ENCODE measurements at regions of chrX and their contacts with region 1.

Region 1: DNA sequence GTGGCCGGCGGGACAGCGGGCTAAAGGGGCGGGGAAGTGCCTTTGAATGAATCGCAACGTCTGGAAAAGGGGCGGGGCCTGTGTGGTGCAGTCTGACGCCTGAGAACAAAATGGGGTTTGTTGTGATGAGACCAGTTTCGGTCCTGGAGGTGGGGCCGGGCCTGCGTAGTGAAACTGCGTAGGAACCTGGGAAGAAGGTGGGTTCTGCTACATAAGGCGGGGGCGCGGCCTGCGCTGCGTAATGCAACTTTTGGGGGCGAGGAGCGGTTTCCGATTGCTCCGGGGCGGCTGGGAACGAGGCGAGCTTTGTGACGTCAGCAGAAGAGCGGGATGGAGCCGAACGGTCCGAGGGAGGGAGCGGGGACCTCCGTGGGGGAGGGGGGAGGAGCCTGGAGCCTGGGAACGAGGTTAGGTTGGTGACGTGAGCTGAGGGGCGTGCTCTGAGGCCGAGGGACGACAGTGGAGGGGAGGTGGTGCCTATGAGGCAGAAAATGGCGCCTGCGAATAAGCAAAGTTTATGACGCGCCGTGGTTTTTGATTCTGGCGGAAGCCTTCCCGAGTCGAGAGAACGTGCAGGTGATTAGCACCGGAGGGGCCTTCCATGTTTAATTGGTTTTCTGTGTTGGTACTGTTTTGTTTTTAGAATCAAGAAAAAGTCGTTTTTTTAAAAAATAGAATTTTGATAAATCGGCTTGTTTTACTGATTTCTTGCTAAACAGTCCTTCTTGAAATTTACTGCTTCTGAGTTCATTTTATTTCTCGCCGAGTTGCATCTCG is 716 bp downstream of the USP11 start:
- DNase-seq: peak; percentile 87
- ATAC-seq: peak; percentile 89
- H3K4me3 Mint-ChIP-seq: peak overlapping the region; percentile 93
- H3K27ac Mint-ChIP-seq: peak overlapping the region; percentile 100
- H3K4me1 Mint-ChIP-seq: peaks cover 10% of the 10 kb centered on the region
- H3K27me3 Mint-ChIP-seq: no peaks in the 10 kb centered on the region
- CTCF ChIP-seq: no peak

Region 2: GRCh38 chrX:46978341-46979291 is 254.9 kb before region 1 on chrX:
- CTCF ChIA-PET with region 1: no interaction called
- POLR2A ChIA-PET with region 1: no interaction called
- DNase-seq: peak; percentile 80
- ATAC-seq: peak; percentile 80
- H3K4me3 Mint-ChIP-seq: no peak overlapping the region
- H3K27ac Mint-ChIP-seq: peak overlapping the region; percentile 28
- H3K4me1 Mint-ChIP-seq: peaks cover 55% of the 10 kb centered on the region
- H3K27me3 Mint-ChIP-seq: no peaks in the 10 kb centered on the region
- CTCF ChIP-seq: peak; percentile 54

Region 3: DNA sequence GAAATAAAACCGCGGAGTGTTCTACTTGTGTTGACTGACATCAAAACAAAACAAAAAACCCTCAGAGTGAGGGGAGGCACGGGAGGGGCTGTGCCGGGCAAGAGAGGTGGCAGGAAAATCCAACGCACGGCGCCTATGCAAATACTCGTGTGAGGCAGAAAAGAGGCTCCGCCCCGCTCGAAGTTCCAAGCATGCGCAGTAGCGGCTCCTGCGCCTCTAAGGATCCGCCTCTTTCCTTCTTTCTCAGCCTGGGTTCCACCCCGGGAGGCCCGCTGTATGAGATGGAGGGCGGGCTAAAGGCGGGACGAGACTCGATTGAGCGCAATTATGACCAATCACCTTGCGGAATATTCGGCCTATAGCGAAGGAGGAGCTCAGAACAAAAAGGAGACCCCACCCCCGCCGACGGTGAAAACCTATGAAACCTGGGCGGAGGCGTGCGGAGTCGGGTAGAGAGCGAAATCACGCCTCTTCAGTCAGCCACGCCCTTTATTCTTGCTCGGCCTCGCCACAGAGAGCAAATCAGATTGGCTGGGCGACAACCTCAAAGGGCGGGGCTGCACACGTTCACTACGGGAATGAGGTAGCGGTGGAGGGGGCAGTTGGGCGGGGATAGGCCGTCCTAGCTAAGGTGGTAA is 15.8 kb before region 1 on chrX:
- CTCF ChIA-PET with region 1: no interaction called
- POLR2A ChIA-PET with region 1: interaction called, 14 read pairs
- DNase-seq: peak; percentile 94
- ATAC-seq: peak; percentile 87
- H3K4me3 Mint-ChIP-seq: peak overlapping the region; percentile 90
- H3K27ac Mint-ChIP-seq: peak overlapping the region; percentile 99
- H3K4me1 Mint-ChIP-seq: peaks cover 30% of the 10 kb centered on the region
- H3K27me3 Mint-ChIP-seq: no peaks in the 10 kb centered on the region; the same call in 1 of the 2 replicates
- CTCF ChIP-seq: no peak

Region 4: GRCh38 chrX:47321386-47321785 is 87.9 kb after region 1 on chrX:
- CTCF ChIA-PET with region 1: no interaction called
- POLR2A ChIA-PET with region 1: interaction called, 19 read pairs
- DNase-seq: peak; percentile 87
- ATAC-seq: peak; percentile 89
- H3K4me3 Mint-ChIP-seq: peak overlapping the region; percentile 37
- H3K27ac Mint-ChIP-seq: peak overlapping the region; percentile 99
- H3K4me1 Mint-ChIP-seq: peaks cover 34% of the 10 kb centered on the region
- H3K27me3 Mint-ChIP-seq: no peaks in the 10 kb centered on the region
- CTCF ChIP-seq: no peak